Activated CD4-positive, alpha-beta memory T cell treated with anti-CD3 and anti-CD28 coated beads, Interleukin-2, amount 10 ng/mL, durations not matched to agents 7 days and 5 days (primary cell): ENCODE measurements at regions of chr11 and their contacts with region 1.

Region 1: GRCh38 chr11:48001438-48002021 is 21.2 kb downstream of the PTPRJ start:
- DNase-seq: peak; percentile 93
- H3K4me3 Mint-ChIP-seq: peak overlapping the region; percentile 43
- H3K27ac Mint-ChIP-seq: peak overlapping the region; percentile 100
- H3K4me1 Mint-ChIP-seq: peaks cover 90% of the 10 kb centered on the region
- H3K27me3 Mint-ChIP-seq: no peaks in the 10 kb centered on the region

Region 2: GRCh38 chr11:47587723-47588326 is 413.7 kb before region 1 on chr11:
- CTCF ChIA-PET with region 1: no interaction called
- POLR2A ChIA-PET with region 1: no interaction called
- DNase-seq: no peak
- H3K4me3 Mint-ChIP-seq: no peak overlapping the region
- H3K27ac Mint-ChIP-seq: no peak overlapping the region
- H3K4me1 Mint-ChIP-seq: peaks cover 10% of the 10 kb centered on the region
- H3K27me3 Mint-ChIP-seq: peaks cover 7% of the 10 kb centered on the region

Region 3: DNA sequence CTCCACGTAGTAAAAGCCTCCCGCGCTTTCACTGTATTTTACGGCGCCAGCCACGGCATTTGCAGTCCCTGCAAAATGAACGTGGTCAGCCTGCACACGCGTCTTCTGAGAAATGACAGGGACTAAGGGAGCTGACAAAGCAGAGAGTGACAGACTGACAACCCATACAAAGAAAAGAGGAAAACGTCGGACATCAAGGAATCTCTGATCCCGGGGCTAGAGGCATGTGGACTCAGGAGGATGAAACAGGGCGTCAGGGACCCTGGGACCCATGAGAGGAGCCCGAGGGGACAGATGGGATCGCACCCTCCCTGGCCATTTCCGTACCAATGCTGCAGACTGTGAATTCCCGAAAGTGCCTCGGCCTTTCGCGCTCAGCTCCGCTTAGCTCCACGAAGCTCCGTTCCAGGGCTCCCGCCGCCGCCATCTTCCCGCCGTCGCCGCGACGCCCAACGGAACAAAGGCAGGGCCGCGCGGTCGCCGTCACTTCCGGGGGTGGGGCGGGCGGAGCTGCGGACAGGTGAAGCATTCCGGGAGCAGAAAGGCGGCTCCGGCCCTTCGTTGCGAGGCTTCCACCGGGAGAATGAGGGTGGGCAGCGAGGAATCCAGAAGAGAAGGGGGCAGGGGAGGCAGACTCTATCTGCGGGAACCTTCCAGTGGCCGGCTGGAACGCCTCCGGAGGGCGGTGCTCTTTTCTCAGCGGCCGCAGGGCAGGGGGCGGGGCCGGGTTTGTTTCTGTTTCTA is 153.5 kb before region 1 on chr11 and contains the start of gene NUP160:
- CTCF ChIA-PET with region 1: no interaction called
- POLR2A ChIA-PET with region 1: interaction called, 14 read pairs
- DNase-seq: peak; percentile 91
- H3K4me3 Mint-ChIP-seq: peak within 1 kb of the TSS; percentile 89
- H3K27ac Mint-ChIP-seq: peak within 1 kb of the TSS; percentile 94
- H3K4me1 Mint-ChIP-seq: peaks cover 49% of the 10 kb centered on the region
- H3K27me3 Mint-ChIP-seq: no peaks in the 10 kb centered on the region
- total RNA-seq, gene NUP160: 52.0 to 52.9 TPM

Region 4: GRCh38 chr11:47980245-47981049 is 21.1 kb before region 1 on chr11 and contains the start of gene PTPRJ:
- CTCF ChIA-PET with region 1: interaction called, 15 read pairs
- POLR2A ChIA-PET with region 1: interaction called, 56 read pairs
- DNase-seq: peak; percentile 60
- H3K4me3 Mint-ChIP-seq: peak within 1 kb of the TSS; percentile 99
- H3K27ac Mint-ChIP-seq: peak within 1 kb of the TSS; percentile 94
- H3K4me1 Mint-ChIP-seq: peaks cover 27% of the 10 kb centered on the region
- H3K27me3 Mint-ChIP-seq: peaks cover 15% of the 10 kb centered on the region
- total RNA-seq, gene PTPRJ: 83.0 to 89.1 TPM

Region 5: DNA sequence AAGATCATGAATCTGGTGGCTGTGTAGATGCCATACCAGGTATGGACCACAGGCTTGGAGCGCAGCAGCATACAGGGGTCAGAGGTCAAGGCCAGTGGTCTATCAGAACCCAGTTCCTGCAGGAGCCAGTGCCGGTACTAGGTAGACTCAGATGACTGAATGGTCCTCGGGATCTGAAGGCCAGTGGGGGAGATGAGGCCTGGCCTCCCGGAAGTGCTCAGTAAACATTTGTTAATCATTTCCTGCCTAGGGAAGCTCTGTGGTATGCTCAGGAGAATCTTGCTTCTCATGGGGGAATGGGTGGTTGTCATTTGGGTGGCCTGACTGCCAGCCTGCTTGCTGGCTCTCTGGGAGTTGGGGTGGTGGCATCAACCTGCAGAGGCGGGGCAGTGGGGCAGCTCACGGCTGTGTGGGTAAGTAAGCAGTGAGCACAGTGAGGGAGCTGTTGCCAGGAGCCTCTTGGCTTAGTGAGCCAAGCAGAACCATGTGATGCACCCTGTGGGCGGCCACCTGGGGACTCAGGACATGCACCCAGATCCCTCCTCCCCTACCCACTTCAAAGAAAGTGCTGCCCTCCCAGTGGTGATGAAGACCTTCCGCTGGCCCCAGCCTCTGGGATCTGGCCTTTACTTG is 11.9 kb after region 1 on chr11:
- CTCF ChIA-PET with region 1: interaction called, 24 read pairs
- POLR2A ChIA-PET with region 1: interaction called, 366 read pairs
- DNase-seq: peak; percentile 83
- H3K4me3 Mint-ChIP-seq: peak overlapping the region; percentile 69
- H3K27ac Mint-ChIP-seq: peak overlapping the region; percentile 99
- H3K4me1 Mint-ChIP-seq: peaks cover 91% of the 10 kb centered on the region
- H3K27me3 Mint-ChIP-seq: no peaks in the 10 kb centered on the region

Region 6: GRCh38 chr11:48109046-48109666 is 107.6 kb after region 1 on chr11:
- CTCF ChIA-PET with region 1: interaction called, 16 read pairs
- POLR2A ChIA-PET with region 1: interaction called, 15 read pairs
- DNase-seq: no peak
- H3K4me3 Mint-ChIP-seq: peak overlapping the region; percentile 62
- H3K27ac Mint-ChIP-seq: peak overlapping the region; percentile 84
- H3K4me1 Mint-ChIP-seq: peaks cover 59% of the 10 kb centered on the region
- H3K27me3 Mint-ChIP-seq: no peaks in the 10 kb centered on the region